ENCODE measurements at regions of chr15 and their contacts with region 1.

Region 1: DNA sequence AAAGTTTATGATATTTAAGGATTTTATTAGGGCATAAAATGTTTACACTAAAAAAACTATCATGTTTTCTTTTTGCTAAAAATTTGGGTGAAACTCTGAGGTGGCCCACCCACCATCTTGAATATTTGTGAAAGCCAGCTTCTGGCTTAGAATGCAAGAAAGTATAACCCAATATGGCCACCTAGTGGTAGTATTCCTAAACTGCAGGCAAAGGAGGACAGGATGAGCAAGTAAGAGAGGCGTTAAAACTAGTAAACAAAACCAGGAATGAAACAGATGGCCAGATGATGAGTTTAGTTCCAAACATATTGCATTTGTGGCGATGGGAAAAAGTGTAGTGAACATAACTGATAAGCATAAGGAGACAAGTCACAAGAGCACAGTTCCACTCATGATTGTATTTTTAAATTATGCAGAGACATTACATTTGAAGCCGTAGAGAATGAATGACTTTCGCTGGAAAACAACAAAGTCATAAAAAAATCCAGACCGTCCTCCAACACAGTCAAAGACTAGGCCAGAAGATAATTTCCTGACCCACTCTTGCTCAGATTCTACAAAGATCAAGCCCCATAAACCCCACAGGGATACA is 103.3 kb upstream of the PRTG start:
- DNase-seq: peak; percentile 87
- H3K4me3 ChIP-seq: no peak overlapping the region
- H3K27ac ChIP-seq: no peak overlapping the region
- H3K4me1 ChIP-seq: no peaks in the 10 kb centered on the region
- H3K27me3 ChIP-seq: no peaks in the 10 kb centered on the region
- CTCF ChIP-seq: peak; percentile 66 to 69
- POLR2A ChIP-seq: no peak

Region 2: DNA sequence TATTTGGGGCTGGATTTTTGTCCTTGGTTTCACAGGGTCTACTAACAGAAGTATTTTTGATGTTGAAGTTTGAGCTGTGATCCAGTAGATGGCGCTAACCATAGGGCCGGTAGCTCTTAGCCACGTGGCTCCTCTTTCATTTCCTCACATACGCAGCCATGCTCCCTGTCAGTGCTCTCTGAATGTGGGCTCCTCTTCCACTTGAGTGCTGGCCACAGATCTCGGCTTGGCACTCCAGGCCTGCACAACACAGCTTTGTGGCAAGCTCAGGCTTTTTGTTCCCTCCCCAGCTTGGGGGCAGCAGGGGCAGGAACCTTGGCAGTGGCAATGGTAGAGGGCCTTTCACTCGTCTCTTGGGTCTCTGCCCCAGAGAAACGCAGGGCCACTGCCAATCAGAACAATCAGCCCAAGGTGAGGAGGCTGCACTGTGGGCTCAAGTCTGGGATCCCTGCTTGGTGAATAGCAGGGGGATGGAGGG is 319.6 kb before region 1 on chr15:
- CTCF ChIA-PET with region 1: interaction called, 15 read pairs
- POLR2A ChIA-PET with region 1: no interaction called
- dilution Hi-C with region 1: no loop called
- intact Hi-C with region 1: no loop called
- DNase-seq: peak; percentile 31
- H3K4me3 ChIP-seq: no peak overlapping the region
- H3K27ac ChIP-seq: no peak overlapping the region
- H3K4me1 ChIP-seq: no peaks in the 10 kb centered on the region
- H3K27me3 ChIP-seq: peaks cover 9 to 13% of the 10 kb centered on the region in 2 experiments
- CTCF ChIP-seq: peak; percentile 69 to 75
- POLR2A ChIP-seq: no peak

Region 3: GRCh38 chr15:55637086-55637485 is 209.1 kb before region 1 on chr15:
- CTCF ChIA-PET with region 1: interaction called, 11 read pairs
- POLR2A ChIA-PET with region 1: no interaction called
- dilution Hi-C with region 1: no loop called
- intact Hi-C with region 1: no loop called
- DNase-seq: no peak
- H3K4me3 ChIP-seq: no peak overlapping the region
- H3K27ac ChIP-seq: no peak overlapping the region
- H3K4me1 ChIP-seq: no peaks in the 10 kb centered on the region
- H3K27me3 ChIP-seq: no peaks in the 10 kb centered on the region
- CTCF ChIP-seq: no peak
- POLR2A ChIP-seq: no peak

Region 4: DNA sequence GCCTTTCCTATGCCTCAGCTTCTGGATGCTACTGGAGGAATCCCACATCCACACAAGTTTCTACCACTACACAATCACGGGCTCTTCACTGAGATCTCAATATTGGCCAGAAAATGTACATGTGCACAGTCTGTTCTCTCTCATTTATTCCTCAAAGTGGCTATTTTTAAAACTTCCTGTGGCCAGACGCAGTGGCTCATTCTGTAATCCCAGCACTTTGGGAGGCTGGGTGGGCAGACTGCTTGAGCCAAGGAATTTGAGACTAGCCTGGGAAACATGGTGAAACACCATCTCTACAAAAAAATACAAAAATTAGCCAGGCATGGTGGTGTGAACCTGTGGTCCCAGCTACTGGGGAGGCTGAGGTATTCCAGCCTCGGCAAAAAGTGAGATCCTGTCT is 11.9 kb before region 1 on chr15:
- CTCF ChIA-PET with region 1: interaction called, 21 read pairs
- POLR2A ChIA-PET with region 1: no interaction called
- dilution Hi-C with region 1: no loop called
- intact Hi-C with region 1: no loop called
- DNase-seq: no peak
- H3K4me3 ChIP-seq: no peak overlapping the region
- H3K27ac ChIP-seq: no peak overlapping the region
- H3K4me1 ChIP-seq: no peaks in the 10 kb centered on the region
- H3K27me3 ChIP-seq: no peaks in the 10 kb centered on the region
- CTCF ChIP-seq: no peak
- POLR2A ChIP-seq: no peak

Region 5: DNA sequence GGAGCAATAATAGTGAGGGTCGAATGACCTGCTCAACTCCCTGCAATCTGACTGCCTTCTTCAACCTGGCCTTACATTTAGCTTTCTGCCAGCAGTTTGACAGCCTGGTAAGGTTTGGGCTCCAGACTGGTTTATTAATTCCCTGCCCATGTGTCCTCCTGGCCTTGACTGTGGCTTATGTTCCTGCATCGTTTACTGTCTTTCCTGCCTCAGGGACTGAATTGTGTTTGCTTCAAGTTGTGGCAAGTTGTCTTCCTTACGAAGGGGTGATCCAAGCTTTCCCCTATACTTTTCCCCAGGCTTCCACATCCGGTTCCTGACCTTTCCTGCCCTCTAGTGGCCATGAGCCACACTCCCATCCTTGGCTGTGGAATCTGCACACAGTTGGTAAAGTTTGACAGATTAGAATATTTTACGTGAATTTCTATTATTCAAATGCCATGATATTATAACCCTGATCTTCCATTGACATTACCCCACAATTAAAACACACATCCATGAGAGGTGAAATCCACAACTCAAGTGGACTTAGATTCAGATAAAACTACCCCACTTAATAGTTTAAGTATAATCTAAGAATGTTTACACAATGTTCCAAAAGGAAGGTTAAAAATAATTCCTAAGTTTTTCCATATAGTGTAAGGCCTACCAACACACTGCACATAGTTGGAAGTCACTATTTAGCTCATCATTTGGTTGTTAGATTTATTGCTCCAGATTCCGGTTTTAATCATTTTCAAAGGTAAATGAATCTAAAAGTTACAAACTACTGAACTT is 51.5 kb after region 1 on chr15:
- CTCF ChIA-PET with region 1: interaction called, 23 read pairs
- POLR2A ChIA-PET with region 1: no interaction called
- dilution Hi-C with region 1: no loop called
- intact Hi-C with region 1: loop called (anchors 2 kb)
- DNase-seq: peak; percentile 67
- H3K4me3 ChIP-seq: peak overlapping the region in 1 of 3 experiments; percentile 23
- H3K27ac ChIP-seq: peak overlapping the region; percentile 96
- H3K4me1 ChIP-seq: peaks cover 38% of the 10 kb centered on the region
- H3K27me3 ChIP-seq: no peaks in the 10 kb centered on the region
- CTCF ChIP-seq: peak; percentile 67 to 76
- POLR2A ChIP-seq: no peak

Region 6: DNA sequence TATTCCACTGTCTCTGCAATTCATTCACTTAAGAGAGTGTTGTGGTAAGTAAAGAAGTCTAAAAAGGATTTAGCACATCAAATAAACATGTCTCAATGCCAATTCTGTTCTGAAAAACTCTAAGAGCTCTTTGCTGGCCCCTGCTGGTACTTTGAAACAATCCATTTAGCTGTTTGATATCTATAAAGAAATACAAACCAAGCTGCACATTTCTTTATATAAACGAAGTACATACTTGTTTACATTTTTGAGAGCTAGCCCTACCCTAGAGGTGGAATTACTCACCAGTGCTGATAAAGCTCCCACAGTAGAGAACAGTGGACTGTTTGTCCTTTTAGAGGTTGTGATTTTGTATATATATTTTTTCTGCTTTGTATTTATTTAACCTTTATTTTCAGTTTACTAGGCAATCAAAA is 71.7 kb after region 1 on chr15:
- CTCF ChIA-PET with region 1: interaction called, 60 read pairs
- POLR2A ChIA-PET with region 1: no interaction called
- dilution Hi-C with region 1: no loop called
- intact Hi-C with region 1: loop called (anchors 5 kb)
- DNase-seq: peak; percentile 92
- H3K4me3 ChIP-seq: no peak overlapping the region
- H3K27ac ChIP-seq: no peak overlapping the region
- H3K4me1 ChIP-seq: peaks cover 15% of the 10 kb centered on the region
- H3K27me3 ChIP-seq: no peaks in the 10 kb centered on the region
- CTCF ChIP-seq: peak; percentile 39 to 53
- POLR2A ChIP-seq: no peak

Region 7: GRCh38 chr15:56052395-56053045 is 206.3 kb after region 1 on chr15:
- CTCF ChIA-PET with region 1: interaction called, 13 read pairs
- POLR2A ChIA-PET with region 1: no interaction called
- dilution Hi-C with region 1: no loop called
- intact Hi-C with region 1: no loop called
- DNase-seq: peak; percentile 56
- H3K4me3 ChIP-seq: no peak overlapping the region
- H3K27ac ChIP-seq: no peak overlapping the region
- H3K4me1 ChIP-seq: peaks cover 3% of the 10 kb centered on the region
- H3K27me3 ChIP-seq: no peaks in the 10 kb centered on the region
- CTCF ChIP-seq: peak; percentile 40 to 60
- POLR2A ChIP-seq: no peak

Region 8: GRCh38 chr15:56425976-56426375 is 579.8 kb after region 1 on chr15:
- CTCF ChIA-PET with region 1: no interaction called
- POLR2A ChIA-PET with region 1: no interaction called
- dilution Hi-C with region 1: no loop called
- intact Hi-C with region 1: no loop called
- DNase-seq: no peak
- H3K4me3 ChIP-seq: no peak overlapping the region
- H3K27ac ChIP-seq: no peak overlapping the region
- H3K4me1 ChIP-seq: no peaks in the 10 kb centered on the region
- H3K27me3 ChIP-seq: no peaks in the 10 kb centered on the region
- CTCF ChIP-seq: no peak
- POLR2A ChIP-seq: no peak

Region 9: DNA sequence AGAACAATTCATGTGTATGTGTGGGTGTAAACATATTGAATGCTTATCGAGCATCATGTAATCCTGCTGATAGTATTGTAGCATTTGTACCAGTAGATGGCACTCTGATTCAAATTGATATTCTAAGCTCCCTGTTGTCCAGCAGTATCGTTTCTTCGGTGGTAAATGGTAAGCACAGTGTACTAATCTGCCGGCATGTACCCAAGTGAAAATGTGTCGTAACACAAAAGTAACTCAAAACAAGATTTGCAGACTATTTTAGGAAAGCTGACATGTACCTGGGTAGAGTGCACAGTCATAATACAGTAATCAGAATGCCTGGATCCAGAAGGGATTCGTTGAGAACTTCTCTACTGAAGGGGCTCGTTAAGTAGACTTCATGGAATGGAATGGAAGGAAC is 650.4 kb after region 1 on chr15:
- CTCF ChIA-PET with region 1: no interaction called
- POLR2A ChIA-PET with region 1: no interaction called
- dilution Hi-C with region 1: no loop called
- intact Hi-C with region 1: no loop called
- DNase-seq: peak; percentile 78
- H3K4me3 ChIP-seq: no peak overlapping the region
- H3K27ac ChIP-seq: no peak overlapping the region
- H3K4me1 ChIP-seq: no peaks in the 10 kb centered on the region
- H3K27me3 ChIP-seq: peaks cover 7 to 19% of the 10 kb centered on the region in 2 experiments
- CTCF ChIP-seq: peak; percentile 43 to 47
- POLR2A ChIP-seq: no peak